Activated CD8-positive, alpha-beta T cell treated with anti-CD3 and anti-CD28 coated beads for 36 hours (primary cell): ENCODE measurements at regions of chr11 and their contacts with region 1.

Region 1: GRCh38 chr11:12411806-12412727 is 34.7 kb downstream of the PARVA start:
- DNase-seq: peak; percentile 62
- ATAC-seq: peak; percentile 69
- H3K4me3 Mint-ChIP-seq: no peak overlapping the region
- H3K27ac Mint-ChIP-seq: no peak overlapping the region
- H3K4me1 Mint-ChIP-seq: no peaks in the 10 kb centered on the region
- H3K27me3 Mint-ChIP-seq: peaks cover 4% of the 10 kb centered on the region
- CTCF ChIP-seq: peak; percentile 72

Region 2: GRCh38 chr11:12441231-12441861 is 29.3 kb after region 1 on chr11:
- CTCF ChIA-PET with region 1: no interaction called
- POLR2A ChIA-PET with region 1: no interaction called
- intact Hi-C with region 1: no loop called
- DNase-seq: no peak
- ATAC-seq: no peak
- H3K4me3 Mint-ChIP-seq: no peak overlapping the region
- H3K27ac Mint-ChIP-seq: no peak overlapping the region
- H3K4me1 Mint-ChIP-seq: no peaks in the 10 kb centered on the region
- H3K27me3 Mint-ChIP-seq: no peaks in the 10 kb centered on the region
- CTCF ChIP-seq: no peak

Region 3: DNA sequence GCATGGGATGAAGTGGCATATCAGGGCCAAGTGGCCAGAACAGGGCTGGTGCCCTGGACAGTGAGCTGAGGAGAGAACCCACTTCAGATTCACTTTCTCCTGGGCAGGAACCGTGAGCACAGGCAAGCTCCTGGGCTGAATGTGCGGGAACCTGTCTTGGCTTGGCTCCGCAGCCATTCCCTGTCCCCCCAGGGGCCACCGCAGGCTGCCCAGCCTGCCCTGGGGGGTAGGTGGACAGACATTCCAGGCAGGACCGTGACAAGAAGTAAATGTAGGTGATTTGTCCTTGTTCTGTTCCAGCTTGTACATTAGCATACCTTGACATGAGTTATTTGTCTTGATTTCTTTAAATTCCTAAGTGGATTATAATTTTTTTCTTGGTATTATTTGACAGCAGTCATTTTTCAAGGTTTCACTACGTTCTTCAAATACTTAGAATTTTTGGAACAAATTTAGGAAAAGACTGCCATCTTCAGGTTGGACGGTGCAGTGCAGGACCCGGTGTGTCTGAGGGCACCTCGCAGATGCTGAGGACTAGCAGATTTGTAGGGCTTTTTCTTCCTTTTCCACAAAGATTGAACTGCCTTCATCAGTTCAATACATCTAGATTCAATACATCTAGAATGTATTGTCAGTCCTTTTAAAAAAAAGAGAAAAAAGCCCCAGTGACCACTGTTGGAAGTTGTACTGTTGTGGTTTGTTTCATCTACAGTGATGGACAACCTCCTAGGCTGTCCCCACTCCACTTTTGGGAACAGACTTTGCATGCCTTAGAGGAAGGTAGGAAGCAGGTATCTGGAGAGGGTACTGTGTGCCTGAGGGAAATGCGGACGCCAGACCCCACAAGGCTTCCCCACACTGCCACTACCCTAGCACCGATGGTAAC is 482.0 kb after region 1 on chr11:
- CTCF ChIA-PET with region 1: interaction called, 5 read pairs
- POLR2A ChIA-PET with region 1: no interaction called
- intact Hi-C with region 1: loop called (anchors 5 kb)
- DNase-seq: peak; percentile 74
- ATAC-seq: peak; percentile 55
- H3K4me3 Mint-ChIP-seq: no peak overlapping the region
- H3K27ac Mint-ChIP-seq: no peak overlapping the region
- H3K4me1 Mint-ChIP-seq: no peaks in the 10 kb centered on the region
- H3K27me3 Mint-ChIP-seq: peaks cover 22% of the 10 kb centered on the region
- CTCF ChIP-seq: peak; percentile 88